ENCODE measurements at regions of chr12 and their contacts with region 1.

Region 1: DNA sequence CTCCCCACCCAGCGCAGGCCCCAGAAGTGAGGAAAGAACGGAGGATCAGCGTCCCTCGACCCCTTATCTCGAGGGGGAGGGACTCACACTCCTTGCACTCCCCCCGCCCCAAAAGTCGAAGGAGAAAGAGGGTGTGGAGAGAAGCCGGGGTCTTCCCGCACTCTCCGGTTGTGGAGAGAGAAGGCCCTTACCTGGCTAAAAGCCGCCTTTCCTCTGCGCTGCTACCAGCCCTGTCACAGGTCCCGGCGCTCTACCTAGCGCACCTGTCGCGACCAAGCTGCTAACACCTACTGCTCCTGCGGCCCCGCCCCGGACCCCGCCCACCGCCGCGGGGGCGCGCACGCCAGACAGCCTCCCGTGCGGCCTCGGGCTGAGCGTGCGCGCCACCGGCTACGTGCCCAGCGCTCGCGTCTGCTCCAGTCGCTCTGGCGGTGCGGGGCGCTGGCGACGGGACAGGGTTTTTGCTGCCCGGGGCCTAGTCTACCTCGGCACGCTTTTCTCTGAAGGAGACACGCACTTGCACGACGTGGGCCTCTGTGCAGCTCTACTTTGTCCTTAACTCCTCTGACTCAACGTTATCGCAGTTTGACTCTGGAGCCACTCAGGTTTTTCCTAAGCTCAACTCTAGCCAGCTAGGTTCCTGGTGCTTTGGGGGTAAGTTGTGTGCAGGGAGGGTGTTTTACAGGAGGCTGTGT is at the start of gene LIMA1:
- DNase-seq: peak; percentile 93 to 97
- ATAC-seq: peak; percentile 99
- H3K4me3 ChIP-seq: peak within 1 kb of the TSS; percentile 67 to 81
- H3K27ac ChIP-seq: peak within 1 kb of the TSS in 1 of 2 donors; percentile 70
- H3K4me1 ChIP-seq: no peaks in the 10 kb centered on the region
- H3K27me3 ChIP-seq: no peaks in the 10 kb centered on the region
- total RNA-seq, gene LIMA1: 131 to 177 TPM

Region 2: DNA sequence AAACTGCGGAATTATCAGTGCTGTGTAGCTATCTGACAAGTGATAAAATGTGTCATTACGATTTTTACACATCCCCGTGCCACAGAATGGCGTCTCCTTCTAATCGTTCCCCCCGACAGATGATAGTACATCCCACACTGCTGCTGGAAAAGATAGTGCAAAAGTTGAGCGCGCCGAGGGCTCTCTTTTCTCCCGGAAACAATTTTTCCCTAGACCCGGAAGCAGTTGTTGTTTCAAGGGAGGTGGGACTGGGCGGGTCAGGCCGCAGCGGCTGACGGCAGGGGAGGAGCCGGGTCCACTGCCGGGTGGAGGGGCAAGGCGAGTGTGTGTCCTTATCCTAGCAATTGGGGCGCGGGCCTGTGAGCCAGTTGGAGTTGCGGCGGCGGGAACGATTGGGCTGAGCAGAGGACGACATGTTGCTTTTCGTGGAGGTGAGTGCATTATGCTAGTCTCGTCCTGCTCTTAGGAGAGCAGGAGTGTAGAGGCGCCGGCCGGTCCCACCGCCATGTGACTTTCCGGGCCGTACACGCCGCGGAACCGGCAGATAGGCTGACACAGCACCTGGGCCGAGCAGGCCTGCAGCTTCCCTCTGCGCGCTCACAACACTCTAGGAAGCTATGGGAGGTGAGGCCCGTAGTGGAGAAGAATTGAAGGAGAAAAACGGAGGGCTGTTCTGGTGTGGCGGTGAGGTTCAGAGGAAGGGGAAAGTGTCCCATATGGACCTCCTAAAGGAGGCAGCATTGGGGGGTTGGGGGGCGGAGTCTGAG is 117.4 kb after region 1 on chr12 and contains the start of gene LARP4:
- intact Hi-C with region 1: loop called in 1 of 2 experiments (anchors 2 kb)
- DNase-seq: peak; percentile 95
- ATAC-seq: peak; percentile 98
- H3K4me3 ChIP-seq: peak within 1 kb of the TSS; percentile 74 to 86
- H3K27ac ChIP-seq: peak within 1 kb of the TSS; percentile 43 to 84
- H3K4me1 ChIP-seq: no peaks in the 10 kb centered on the region
- H3K27me3 ChIP-seq: no peaks in the 10 kb centered on the region
- total RNA-seq, gene LARP4: 54.9 to 57.8 TPM

Region 3: DNA sequence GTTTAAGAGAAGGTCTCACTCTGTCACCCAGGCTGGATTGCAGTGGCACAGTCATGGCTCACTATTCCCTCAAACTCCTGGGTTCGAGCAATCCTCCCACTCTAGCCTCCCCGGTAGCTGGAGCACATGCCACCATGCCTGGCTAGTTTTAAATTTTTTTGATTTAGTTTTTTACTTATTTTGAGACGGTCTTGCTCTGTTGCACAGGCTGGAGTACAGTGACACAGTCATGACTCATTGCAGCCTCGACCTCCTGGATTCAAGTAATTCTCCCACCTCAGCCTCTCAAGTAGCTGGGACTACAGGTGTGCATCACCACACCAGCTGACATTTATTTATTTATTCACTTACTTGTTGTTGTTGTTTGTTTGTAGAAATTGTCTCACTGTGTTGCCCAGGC is 199.2 kb after region 1 on chr12:
- intact Hi-C with region 1: no loop called
- DNase-seq: no peak
- ATAC-seq: no peak
- H3K4me3 ChIP-seq: no peak overlapping the region
- H3K27ac ChIP-seq: no peak overlapping the region
- H3K4me1 ChIP-seq: no peaks in the 10 kb centered on the region
- H3K27me3 ChIP-seq: no peaks in the 10 kb centered on the region

Measured in aorta (tissue), 5 donors.